ENCODE measurements at regions of chr2 and their contacts with region 1.

Region 1: DNA sequence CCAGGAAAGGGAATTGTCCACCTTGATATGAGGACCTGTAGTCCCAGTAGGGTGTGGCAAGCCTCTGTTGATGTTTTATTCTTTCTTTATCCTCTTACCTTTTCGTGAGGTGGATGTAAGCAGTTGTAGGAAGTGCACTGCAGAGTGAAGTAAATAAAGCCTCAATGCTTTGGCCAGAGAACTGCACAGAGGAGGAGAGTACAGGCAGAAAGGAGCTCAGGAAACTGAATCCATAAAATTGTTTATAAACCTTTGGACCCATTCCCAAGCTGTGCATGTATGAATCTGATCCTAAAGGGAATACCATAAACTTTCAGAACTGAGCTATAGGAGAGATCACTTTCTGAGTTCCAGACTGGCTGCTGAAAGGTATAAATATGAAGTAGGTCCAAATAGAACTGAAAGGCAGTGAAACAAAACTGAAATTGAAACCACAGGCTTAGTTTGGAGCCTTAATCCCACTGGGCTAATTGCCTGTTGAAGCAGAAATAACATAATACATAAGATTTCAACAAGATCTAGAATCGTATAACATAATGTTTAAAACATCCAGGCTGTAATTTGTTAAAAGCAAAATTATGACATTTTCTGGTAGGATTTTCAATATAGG is 17.9 kb upstream of the SLC9A4 start:
- DNase-seq: no peak
- ATAC-seq: no peak
- H3K4me3 ChIP-seq: no peak overlapping the region
- H3K27ac ChIP-seq: no peak overlapping the region
- H3K4me1 ChIP-seq: no peaks in the 10 kb centered on the region
- H3K27me3 ChIP-seq: no peaks in the 10 kb centered on the region
- CTCF ChIP-seq: no peak
- EP300 ChIP-seq: no peak
- POLR2A ChIP-seq: no peak
- RAD21 ChIP-seq: no peak

Region 2: GRCh38 chr2:102005989-102006885 is 448.9 kb before region 1 on chr2:
- CTCF ChIA-PET with region 1: no interaction called
- POLR2A ChIA-PET with region 1: no interaction called
- in situ Hi-C with region 1: no loop called
- intact Hi-C with region 1: loop called (anchors 5 kb)
- DNase-seq: peak; percentile 66 to 76 (median 68)
- ATAC-seq: peak; percentile 98
- H3K4me3 ChIP-seq: no peak overlapping the region
- H3K27ac ChIP-seq: no peak overlapping the region
- H3K4me1 ChIP-seq: peaks cover 0 to 5% of the 10 kb centered on the region in 2 experiments; a peak in 1 of 5 replicates
- H3K27me3 ChIP-seq: peaks cover 4 to 25% of the 10 kb centered on the region in 2 experiments; a peak in 3 of 5 replicates
- CTCF ChIP-seq: peak; percentile 66 to 86 (median 80)
- EP300 ChIP-seq: no peak
- POLR2A ChIP-seq: no peak
- RAD21 ChIP-seq: peak; percentile 62 to 82

Region 3: GRCh38 chr2:102301867-102302362 is 153.3 kb before region 1 on chr2:
- CTCF ChIA-PET with region 1: no interaction called
- POLR2A ChIA-PET with region 1: no interaction called
- in situ Hi-C with region 1: no loop called
- intact Hi-C with region 1: no loop called
- DNase-seq: peak in 2 of 4 experiments; percentile 23 to 60
- ATAC-seq: peak; percentile 95
- H3K4me3 ChIP-seq: no peak overlapping the region
- H3K27ac ChIP-seq: no peak overlapping the region
- H3K4me1 ChIP-seq: peaks cover 0 to 14% of the 10 kb centered on the region in 2 experiments; a peak in 1 of 5 replicates
- H3K27me3 ChIP-seq: no peaks in the 10 kb centered on the region
- CTCF ChIP-seq: peak; percentile 31 to 66 (median 65); a peak in 5 of 6 replicates
- EP300 ChIP-seq: no peak
- POLR2A ChIP-seq: no peak
- RAD21 ChIP-seq: peak; percentile 64 to 71